H1 (cell line): ENCODE measurements at regions of chr1 and their contacts with region 1.

Region 1: GRCh38 chr1:201254625-201255506 is 28.4 kb upstream of the PKP1 start:
- DNase-seq: peak; percentile 34 to 100
- H3K4me3 ChIP-seq: no peak overlapping the region
- H3K27ac ChIP-seq: no peak overlapping the region
- H3K4me1 ChIP-seq: peaks cover 0 to 6% (median 5%) of the 10 kb centered on the region in 4 experiments; a peak in 5 of 7 replicates
- H3K27me3 ChIP-seq: no peaks in the 10 kb centered on the region; a peak in 2 of 7 replicates
- CTCF ChIP-seq: peak; percentile 97 to 98 (median 97)
- EP300 ChIP-seq: no peak
- POLR2A ChIP-seq: no peak
- RAD21 ChIP-seq: peak; percentile 98 to 99

Region 2: DNA sequence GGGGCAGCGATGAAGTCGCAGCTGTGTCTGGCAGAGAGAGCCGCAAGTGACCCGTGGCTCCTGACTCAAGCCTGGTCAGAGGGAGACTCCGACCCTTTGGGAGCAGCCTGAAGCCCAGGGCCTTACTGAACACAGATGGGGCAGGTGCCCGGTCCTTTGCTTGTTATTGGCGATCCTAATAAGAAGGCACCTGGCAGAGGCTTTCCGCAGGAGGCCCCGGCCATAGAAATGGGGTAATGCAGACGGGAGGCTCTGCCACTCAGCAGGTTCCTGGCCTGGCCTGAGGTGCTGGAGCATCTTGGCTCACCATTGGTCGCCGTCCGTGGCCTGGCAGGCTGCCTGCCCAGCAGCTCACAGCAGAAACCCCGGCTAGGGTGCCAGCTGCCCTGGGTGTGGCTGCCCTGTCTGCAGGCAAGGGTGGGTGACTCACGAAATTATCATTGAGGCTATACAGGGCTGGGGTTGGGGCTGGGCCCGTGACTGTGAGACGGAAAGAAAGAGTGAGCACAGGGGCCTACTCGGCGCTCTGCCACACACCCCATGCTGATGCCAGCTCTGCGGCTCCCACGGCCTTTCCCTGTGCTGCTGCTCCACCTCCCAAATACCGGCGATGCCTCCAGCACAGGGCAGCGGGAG is 20.3 kb after region 1 on chr1:
- CTCF ChIA-PET with region 1: interaction called, 15 read pairs
- POLR2A ChIA-PET with region 1: no interaction called
- DNase-seq: no peak
- H3K4me3 ChIP-seq: no peak overlapping the region
- H3K27ac ChIP-seq: no peak overlapping the region
- H3K4me1 ChIP-seq: peaks cover 0 to 4% (median 0%) of the 10 kb centered on the region in 4 experiments; a peak in 2 of 7 replicates
- H3K27me3 ChIP-seq: peaks cover 0 to 3% (median 0%) of the 10 kb centered on the region in 4 experiments; a peak in 1 of 7 replicates
- CTCF ChIP-seq: no peak
- EP300 ChIP-seq: no peak
- POLR2A ChIP-seq: no peak
- RAD21 ChIP-seq: no peak

Region 3: DNA sequence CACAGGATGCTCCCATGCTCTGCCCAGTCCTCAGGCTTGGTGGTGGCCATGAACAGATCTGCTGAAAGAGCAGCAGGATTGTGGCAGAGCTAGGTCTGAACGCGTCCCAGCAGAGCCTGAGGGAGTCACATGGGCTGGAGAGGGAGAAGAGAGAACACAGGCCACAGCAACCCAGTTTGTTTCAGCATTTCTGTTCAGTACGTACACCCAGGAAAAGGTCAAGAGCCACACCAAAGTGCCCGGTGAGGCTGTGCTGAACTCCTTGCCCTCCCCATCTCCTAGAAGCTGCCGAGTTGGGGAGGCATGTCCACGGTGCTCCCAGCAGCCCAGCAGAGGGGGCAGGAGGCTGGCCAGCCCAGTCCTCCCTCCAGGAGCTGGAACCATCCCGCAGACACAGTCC is 33.9 kb after region 1 on chr1:
- CTCF ChIA-PET with region 1: interaction called, 17 read pairs
- POLR2A ChIA-PET with region 1: interaction called, 4 read pairs
- DNase-seq: no peak
- H3K4me3 ChIP-seq: no peak overlapping the region
- H3K27ac ChIP-seq: no peak overlapping the region
- H3K4me1 ChIP-seq: peaks cover 0 to 6% (median 0%) of the 10 kb centered on the region in 4 experiments; a peak in 4 of 7 replicates
- H3K27me3 ChIP-seq: peaks cover 4 to 11% (median 10%) of the 10 kb centered on the region in 4 experiments
- CTCF ChIP-seq: peak in 1 of 3 experiments; percentile 23; a peak in 1 of 4 replicates
- EP300 ChIP-seq: no peak
- POLR2A ChIP-seq: no peak
- RAD21 ChIP-seq: no peak; a peak in 1 of 4 replicates

Region 4: DNA sequence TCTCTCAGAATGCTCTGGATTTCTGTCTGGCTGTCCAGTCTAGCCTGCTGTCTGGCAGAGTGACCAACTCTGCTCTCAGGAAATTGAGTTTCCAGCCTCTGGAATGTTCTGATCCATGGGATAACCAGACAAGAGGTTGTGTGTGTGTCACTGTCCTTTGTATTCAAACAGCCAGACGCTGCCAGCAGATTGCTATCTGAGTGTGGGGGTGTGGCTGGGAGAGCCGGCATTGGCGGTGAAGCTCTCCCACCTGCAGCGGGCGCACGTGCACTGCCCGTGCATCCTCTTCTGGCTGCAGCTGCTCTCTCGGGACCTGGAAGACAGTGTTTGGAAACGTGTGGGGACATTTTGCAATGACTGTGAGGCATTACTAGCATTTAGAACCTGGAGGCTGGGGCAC is 54.6 kb after region 1 on chr1:
- CTCF ChIA-PET with region 1: interaction called, 22 read pairs
- POLR2A ChIA-PET with region 1: interaction called, 3 read pairs
- DNase-seq: peak; percentile 34 to 69
- H3K4me3 ChIP-seq: no peak overlapping the region
- H3K27ac ChIP-seq: no peak overlapping the region
- H3K4me1 ChIP-seq: peaks cover 0 to 3% (median 0%) of the 10 kb centered on the region in 4 experiments; a peak in 1 of 7 replicates
- H3K27me3 ChIP-seq: peaks cover 0 to 10% (median 6%) of the 10 kb centered on the region in 4 experiments; a peak in 4 of 7 replicates
- CTCF ChIP-seq: peak; percentile 57 to 70 (median 68)
- EP300 ChIP-seq: no peak
- POLR2A ChIP-seq: no peak
- RAD21 ChIP-seq: peak; percentile 75 to 77

Region 5: GRCh38 chr1:201353150-201353801 is 98.4 kb after region 1 on chr1:
- CTCF ChIA-PET with region 1: interaction called, 275 read pairs
- POLR2A ChIA-PET with region 1: interaction called, 6 read pairs
- DNase-seq: no peak
- H3K4me3 ChIP-seq: no peak overlapping the region
- H3K27ac ChIP-seq: no peak overlapping the region
- H3K4me1 ChIP-seq: peaks cover 0 to 11% (median 3%) of the 10 kb centered on the region in 4 experiments; a peak in 6 of 7 replicates
- H3K27me3 ChIP-seq: no peaks in the 10 kb centered on the region
- CTCF ChIP-seq: no peak
- EP300 ChIP-seq: no peak
- POLR2A ChIP-seq: no peak
- RAD21 ChIP-seq: no peak

Region 6: DNA sequence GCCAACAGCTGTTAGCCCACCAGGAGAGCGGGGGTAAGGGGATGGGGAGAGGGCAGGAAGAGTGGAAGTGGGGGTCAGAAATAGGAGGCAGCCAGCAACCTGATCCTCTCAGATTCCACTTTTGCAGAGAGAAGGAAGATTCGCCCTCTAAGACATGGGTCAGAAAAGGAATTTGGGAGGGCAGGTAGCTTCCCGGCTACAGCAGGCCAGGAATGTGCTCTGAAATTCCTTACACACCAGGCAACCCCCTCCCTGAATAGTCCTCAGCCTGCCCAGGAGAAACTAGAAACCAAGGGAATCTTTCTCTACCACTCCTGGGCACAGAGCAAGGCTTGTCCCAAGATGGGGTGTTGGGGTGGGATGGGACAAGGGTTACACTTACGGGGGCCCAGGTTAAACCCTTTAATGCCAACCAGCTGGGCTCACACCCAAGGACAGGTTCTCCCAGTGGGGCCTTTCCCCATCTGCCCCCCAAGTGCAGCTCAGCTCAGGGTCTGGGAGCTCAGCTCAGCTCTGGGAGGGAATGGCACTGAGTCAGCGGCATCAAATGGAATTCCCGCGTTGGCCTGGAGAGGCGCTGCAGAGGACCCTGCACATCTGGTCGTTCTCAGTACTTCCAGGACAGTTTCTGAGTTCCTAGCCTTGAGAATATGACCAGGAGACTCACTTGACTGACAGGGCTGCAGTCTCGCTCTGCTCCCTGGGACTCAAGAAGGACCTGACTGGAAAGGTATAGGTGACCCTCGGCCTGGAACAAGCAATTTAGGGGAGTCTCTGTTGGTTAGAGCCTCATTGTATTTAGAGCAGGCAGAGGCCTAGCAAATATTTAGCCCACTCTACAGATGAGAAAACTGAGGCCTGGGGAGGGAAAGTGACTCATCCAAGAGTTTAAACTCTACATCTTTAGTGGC is 121.9 kb after region 1 on chr1:
- CTCF ChIA-PET with region 1: interaction called, 23 read pairs
- POLR2A ChIA-PET with region 1: interaction called, 4 read pairs
- DNase-seq: peak; percentile 86 to 93
- H3K4me3 ChIP-seq: peak overlapping the region in 3 of 4 experiments; percentile 30 to 51 (median 46); a peak in 5 of 8 replicates
- H3K27ac ChIP-seq: peak overlapping the region; percentile 95
- H3K4me1 ChIP-seq: peaks cover 9 to 40% (median 29%) of the 10 kb centered on the region in 4 experiments
- H3K27me3 ChIP-seq: no peaks in the 10 kb centered on the region
- CTCF ChIP-seq: peak; percentile 67 to 96 (median 94)
- EP300 ChIP-seq: peak in 1 of 2 experiments; percentile 76; a peak in 1 of 3 replicates
- POLR2A ChIP-seq: peak; percentile 76 to 77
- RAD21 ChIP-seq: peak; percentile 37 to 55; a peak in 3 of 4 replicates

Region 7: GRCh38 chr1:201408176-201408833 is 153.4 kb after region 1 on chr1:
- CTCF ChIA-PET with region 1: interaction called, 18 read pairs
- POLR2A ChIA-PET with region 1: no interaction called
- DNase-seq: peak; percentile 80 to 98
- H3K4me3 ChIP-seq: no peak overlapping the region
- H3K27ac ChIP-seq: no peak overlapping the region
- H3K4me1 ChIP-seq: peaks cover 0 to 5% (median 0%) of the 10 kb centered on the region in 4 experiments; a peak in 2 of 7 replicates
- H3K27me3 ChIP-seq: no peaks in the 10 kb centered on the region; a peak in 1 of 7 replicates
- CTCF ChIP-seq: peak; percentile 91 to 99 (median 99)
- EP300 ChIP-seq: no peak
- POLR2A ChIP-seq: no peak
- RAD21 ChIP-seq: peak; percentile 81 to 82